ENCODE measurements at regions of chr20 and their contacts with region 1.

Region 1: DNA sequence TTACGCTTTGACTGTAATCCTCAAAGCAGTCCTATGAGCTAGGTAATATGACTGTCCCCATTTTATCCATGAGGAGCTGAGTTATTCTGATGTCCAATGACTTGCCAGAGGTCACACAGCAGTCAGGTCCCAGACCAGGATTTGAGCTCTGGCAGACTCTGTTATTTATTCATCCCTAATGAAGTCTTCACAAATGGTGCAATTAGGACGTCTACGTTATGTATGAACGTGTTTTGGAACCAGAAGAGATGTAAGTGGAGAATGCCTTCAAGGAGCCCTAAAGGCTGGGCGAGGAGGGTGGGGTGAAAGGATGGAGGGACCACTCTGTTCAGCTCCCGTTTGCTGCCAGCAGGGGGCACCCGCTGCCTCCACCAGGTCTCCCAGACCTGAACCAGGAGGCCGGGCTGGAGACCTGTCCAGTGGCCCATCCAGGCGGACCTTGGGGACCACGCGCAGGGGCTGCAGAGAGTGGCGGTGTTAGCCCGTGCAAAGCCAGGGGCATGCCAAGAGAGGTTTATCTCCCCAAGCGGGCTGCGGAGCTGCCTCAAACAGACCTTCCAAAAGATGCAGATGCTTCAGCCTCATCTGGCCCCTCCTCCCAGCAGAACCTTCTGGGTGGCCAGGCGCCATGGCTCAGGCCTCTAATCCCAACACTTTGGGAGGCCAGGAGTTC is 15.2 kb upstream of the ZNF335 start:
- DNase-seq: peak; percentile 89
- ATAC-seq: peak; percentile 99
- H3K4me3 Mint-ChIP-seq: no peak overlapping the region
- H3K27ac Mint-ChIP-seq: no peak overlapping the region
- H3K4me1 Mint-ChIP-seq: peaks cover 3% of the 10 kb centered on the region
- H3K27me3 Mint-ChIP-seq: peaks cover 12% of the 10 kb centered on the region
- CTCF ChIP-seq: peak; percentile 88

Region 2: GRCh38 chr20:45916449-45916848 is 70.8 kb before region 1 on chr20:
- CTCF ChIA-PET with region 1: no interaction called
- POLR2A ChIA-PET with region 1: no interaction called
- intact Hi-C with region 1: no loop called
- DNase-seq: no peak
- ATAC-seq: no peak
- H3K4me3 Mint-ChIP-seq: no peak overlapping the region
- H3K27ac Mint-ChIP-seq: no peak overlapping the region
- H3K4me1 Mint-ChIP-seq: peaks cover 10% of the 10 kb centered on the region
- H3K27me3 Mint-ChIP-seq: peaks cover 12% of the 10 kb centered on the region
- CTCF ChIP-seq: no peak

Region 3: DNA sequence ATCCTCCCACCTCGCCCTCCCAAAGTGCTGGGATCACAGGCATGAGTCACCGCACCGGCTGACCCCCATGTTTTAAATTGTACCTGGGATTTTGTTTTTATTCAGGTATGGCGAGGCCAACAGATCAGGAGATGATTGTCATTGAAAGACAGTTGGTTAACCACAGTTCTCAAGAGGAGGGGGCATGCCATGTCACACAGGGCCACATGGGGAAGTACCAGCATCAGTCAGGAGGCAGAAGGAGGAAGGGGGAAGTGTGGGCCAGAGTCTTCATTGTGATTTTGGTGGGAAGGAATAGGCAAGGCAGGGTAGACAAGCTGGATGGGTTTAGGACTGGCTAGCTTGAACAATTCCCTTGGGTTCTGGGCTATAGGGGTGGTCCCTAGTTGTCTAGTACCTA is 11.5 kb after region 1 on chr20:
- CTCF ChIA-PET with region 1: interaction called, 33 read pairs
- POLR2A ChIA-PET with region 1: no interaction called
- intact Hi-C with region 1: no loop called
- DNase-seq: peak; percentile 63
- ATAC-seq: peak; percentile 85
- H3K4me3 Mint-ChIP-seq: no peak overlapping the region
- H3K27ac Mint-ChIP-seq: peak overlapping the region; percentile 2
- H3K4me1 Mint-ChIP-seq: peaks cover 52% of the 10 kb centered on the region
- H3K27me3 Mint-ChIP-seq: peaks cover 13% of the 10 kb centered on the region
- CTCF ChIP-seq: no peak

Region 4: GRCh38 chr20:46004889-46005473 is 17.7 kb after region 1 on chr20:
- CTCF ChIA-PET with region 1: interaction called, 33 read pairs
- POLR2A ChIA-PET with region 1: interaction called, 4 read pairs
- intact Hi-C with region 1: no loop called
- DNase-seq: peak; percentile 49
- ATAC-seq: peak; percentile 52
- H3K4me3 Mint-ChIP-seq: no peak overlapping the region
- H3K27ac Mint-ChIP-seq: no peak overlapping the region
- H3K4me1 Mint-ChIP-seq: peaks cover 61% of the 10 kb centered on the region
- H3K27me3 Mint-ChIP-seq: peaks cover 29% of the 10 kb centered on the region
- CTCF ChIP-seq: no peak

Region 5: GRCh38 chr20:46057856-46058598 is 70.8 kb after region 1 on chr20:
- CTCF ChIA-PET with region 1: interaction called, 10 read pairs
- POLR2A ChIA-PET with region 1: interaction called, 4 read pairs
- intact Hi-C with region 1: no loop called
- DNase-seq: peak; percentile 33
- ATAC-seq: no peak
- H3K4me3 Mint-ChIP-seq: no peak overlapping the region
- H3K27ac Mint-ChIP-seq: no peak overlapping the region
- H3K4me1 Mint-ChIP-seq: peaks cover 50% of the 10 kb centered on the region
- H3K27me3 Mint-ChIP-seq: peaks cover 34% of the 10 kb centered on the region
- CTCF ChIP-seq: no peak

Measured in activated CD8-positive, alpha-beta T cell treated with anti-CD3 and anti-CD28 coated beads for 36 hours (primary cell).